IMR-90 (cell line): ENCODE measurements at regions of chr10 and their contacts with region 1.

Region 1: DNA sequence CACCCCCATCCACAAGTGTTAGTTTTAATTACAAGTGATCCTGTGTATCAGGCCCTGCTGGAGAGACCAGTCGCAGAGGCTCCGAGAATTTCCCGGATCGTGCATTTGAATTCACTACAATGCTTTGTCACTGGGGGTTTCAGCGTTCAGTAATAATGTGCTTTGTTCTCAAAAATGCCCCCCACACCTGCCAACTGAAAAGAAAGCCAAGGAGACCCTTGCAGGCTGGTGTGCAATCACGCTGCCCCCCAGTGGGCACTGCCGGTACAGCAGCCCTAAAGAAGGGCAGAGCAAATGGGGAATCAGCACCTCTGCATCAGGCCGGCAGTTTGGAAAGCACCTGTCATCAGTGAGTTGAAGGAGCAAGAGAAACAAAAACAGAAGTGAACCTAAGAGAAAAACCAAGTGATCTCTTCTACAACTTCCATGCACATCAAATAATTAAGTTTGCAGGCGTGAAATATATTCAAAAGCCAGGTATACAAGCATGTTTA is 177.6 kb downstream of the PARD3 start:
- DNase-seq: peak; percentile 23
- ATAC-seq: peak; percentile 79
- H3K4me3 ChIP-seq: no peak overlapping the region
- H3K27ac ChIP-seq: no peak overlapping the region
- H3K4me1 ChIP-seq: no peaks in the 10 kb centered on the region
- H3K27me3 ChIP-seq: no peaks in the 10 kb centered on the region
- CTCF ChIP-seq: peak; percentile 86
- POLR2A ChIP-seq: no peak
- RAD21 ChIP-seq: peak; percentile 87

Region 2: GRCh38 chr10:33193057-33193700 is 1444.3 kb before region 1 on chr10:
- CTCF ChIA-PET with region 1: interaction called, 4 read pairs
- POLR2A ChIA-PET with region 1: no interaction called
- dilution Hi-C with region 1: no loop called
- in situ Hi-C with region 1: no loop called
- intact Hi-C with region 1: loop called (anchors 1 kb)
- DNase-seq: peak; percentile 87
- ATAC-seq: peak; percentile 81
- H3K4me3 ChIP-seq: no peak overlapping the region
- H3K27ac ChIP-seq: no peak overlapping the region
- H3K4me1 ChIP-seq: peaks cover 18% of the 10 kb centered on the region
- H3K27me3 ChIP-seq: no peaks in the 10 kb centered on the region
- CTCF ChIP-seq: peak; percentile 77
- POLR2A ChIP-seq: no peak
- RAD21 ChIP-seq: peak; percentile 84

Region 3: GRCh38 chr10:33901166-33901565 is 736.3 kb before region 1 on chr10:
- CTCF ChIA-PET with region 1: no interaction called
- POLR2A ChIA-PET with region 1: no interaction called
- dilution Hi-C with region 1: no loop called
- in situ Hi-C with region 1: no loop called
- intact Hi-C with region 1: loop called (anchors 10 kb)
- DNase-seq: peak; percentile 92
- ATAC-seq: peak; percentile 80
- H3K4me3 ChIP-seq: no peak overlapping the region
- H3K27ac ChIP-seq: peak overlapping the region; percentile 48; the same call in 1 of the 2 replicates
- H3K4me1 ChIP-seq: peaks cover 7% of the 10 kb centered on the region
- H3K27me3 ChIP-seq: no peaks in the 10 kb centered on the region; the same call in 1 of the 2 replicates
- CTCF ChIP-seq: no peak
- POLR2A ChIP-seq: no peak
- RAD21 ChIP-seq: no peak

Region 4: GRCh38 chr10:34213193-34213804 is 424.2 kb before region 1 on chr10:
- CTCF ChIA-PET with region 1: no interaction called
- POLR2A ChIA-PET with region 1: no interaction called
- dilution Hi-C with region 1: no loop called
- in situ Hi-C with region 1: no loop called
- intact Hi-C with region 1: loop called (anchors 10 kb)
- DNase-seq: no peak
- ATAC-seq: no peak
- H3K4me3 ChIP-seq: no peak overlapping the region
- H3K27ac ChIP-seq: no peak overlapping the region
- H3K4me1 ChIP-seq: peaks cover 8% of the 10 kb centered on the region
- H3K27me3 ChIP-seq: no peaks in the 10 kb centered on the region
- CTCF ChIP-seq: no peak
- POLR2A ChIP-seq: no peak
- RAD21 ChIP-seq: no peak

Region 5: DNA sequence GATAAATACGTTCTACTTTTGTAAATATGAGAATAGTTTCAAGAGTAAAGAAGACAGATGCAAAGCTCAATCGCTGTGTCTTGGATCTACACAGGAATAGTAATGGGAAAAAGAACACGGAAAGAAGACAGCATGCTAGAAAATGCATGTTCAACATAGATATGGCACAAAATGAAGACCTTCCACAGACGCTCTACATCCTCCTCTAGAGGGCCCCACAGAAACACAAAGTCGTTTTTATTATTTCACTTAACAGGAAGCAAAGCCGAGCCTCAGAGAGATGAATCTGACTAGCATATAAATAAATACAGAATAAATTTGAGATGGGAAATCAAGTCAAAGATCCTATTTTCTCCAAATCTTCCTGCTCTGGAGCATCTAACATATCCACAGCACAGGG is 114.9 kb before region 1 on chr10:
- CTCF ChIA-PET with region 1: interaction called, 3 read pairs
- POLR2A ChIA-PET with region 1: no interaction called
- dilution Hi-C with region 1: no loop called
- in situ Hi-C with region 1: loop called (anchors 5 kb)
- intact Hi-C with region 1: loop called (anchors 1 kb)
- DNase-seq: peak; percentile 35
- ATAC-seq: 0 out of 2 replicates have a peak, but pooled peaks have one; percentile 28
- H3K4me3 ChIP-seq: no peak overlapping the region
- H3K27ac ChIP-seq: no peak overlapping the region
- H3K4me1 ChIP-seq: peaks cover 10% of the 10 kb centered on the region
- H3K27me3 ChIP-seq: no peaks in the 10 kb centered on the region
- CTCF ChIP-seq: peak; percentile 59
- POLR2A ChIP-seq: no peak
- RAD21 ChIP-seq: peak; percentile 52

Region 6: DNA sequence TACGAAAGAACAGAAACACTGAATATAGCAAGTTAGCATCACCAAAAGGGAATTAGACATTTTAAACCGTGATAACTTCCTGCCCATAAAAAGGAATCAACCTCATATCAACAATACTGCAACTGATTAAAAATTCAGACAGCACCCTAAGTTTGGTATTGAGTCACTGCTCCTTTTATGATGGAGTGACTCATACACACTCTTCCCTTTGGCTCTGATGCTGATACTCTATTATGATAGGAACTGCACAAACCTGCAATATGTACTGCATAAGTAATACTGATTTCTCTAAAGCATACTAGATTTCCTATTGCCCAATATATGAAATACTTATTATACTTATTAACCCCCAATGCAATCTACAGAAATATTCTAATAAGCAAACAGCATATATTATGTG is 59.0 kb after region 1 on chr10:
- CTCF ChIA-PET with region 1: no interaction called
- POLR2A ChIA-PET with region 1: no interaction called
- dilution Hi-C with region 1: no loop called
- in situ Hi-C with region 1: no loop called
- intact Hi-C with region 1: no loop called
- DNase-seq: peak; percentile 84
- ATAC-seq: peak; percentile 74
- H3K4me3 ChIP-seq: no peak overlapping the region
- H3K27ac ChIP-seq: no peak overlapping the region
- H3K4me1 ChIP-seq: peaks cover 5% of the 10 kb centered on the region
- H3K27me3 ChIP-seq: no peaks in the 10 kb centered on the region
- CTCF ChIP-seq: no peak
- POLR2A ChIP-seq: no peak
- RAD21 ChIP-seq: no peak

Region 7: DNA sequence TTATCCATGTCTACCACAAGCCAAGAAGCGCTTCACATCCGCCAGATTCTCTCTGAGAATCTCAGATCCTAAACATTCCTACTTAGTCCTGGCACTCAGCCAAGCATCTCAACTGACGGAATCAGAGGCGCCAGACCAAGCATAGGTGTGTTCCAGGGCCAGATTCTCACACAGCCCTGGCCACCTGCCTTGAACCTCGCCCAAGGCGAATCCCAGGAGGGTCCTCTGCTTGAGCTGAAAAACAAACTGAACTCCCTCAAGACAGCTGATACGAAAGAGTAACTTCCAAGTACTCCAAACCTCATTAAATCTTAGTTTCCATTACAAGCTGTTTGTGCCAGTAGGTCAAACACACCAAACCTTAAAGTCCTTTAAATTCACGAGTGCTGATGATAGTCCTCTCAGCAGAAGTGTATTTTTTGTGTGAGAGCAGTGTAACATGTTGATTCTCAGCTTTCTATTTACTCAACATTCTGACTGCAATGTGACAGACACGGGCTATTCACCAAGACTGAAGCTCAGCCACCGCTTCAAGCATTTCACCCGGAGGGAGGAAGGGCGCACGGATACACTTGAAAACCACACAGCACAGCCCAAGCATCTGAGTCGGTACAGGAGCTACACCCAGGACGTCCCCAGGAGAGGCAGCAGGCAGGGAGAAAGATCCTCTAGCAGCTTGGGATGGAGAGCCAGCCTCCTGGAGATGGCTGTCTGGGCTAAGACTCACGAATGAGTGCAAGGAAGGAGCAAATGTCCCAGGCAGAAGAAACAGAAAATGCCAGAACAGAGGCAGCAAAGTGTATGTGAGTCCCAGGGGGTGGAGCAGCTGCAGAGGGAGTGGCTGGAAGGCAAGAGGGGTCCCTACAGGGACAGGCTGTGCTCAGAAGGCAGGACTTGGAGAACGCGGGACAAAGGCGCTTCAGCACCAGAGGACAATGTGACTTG is 171.6 kb after region 1 on chr10:
- CTCF ChIA-PET with region 1: no interaction called
- POLR2A ChIA-PET with region 1: no interaction called
- dilution Hi-C with region 1: no loop called
- in situ Hi-C with region 1: no loop called
- intact Hi-C with region 1: no loop called
- DNase-seq: peak; percentile 43
- ATAC-seq: peak; percentile 41
- H3K4me3 ChIP-seq: peak overlapping the region; percentile 44
- H3K27ac ChIP-seq: no peak overlapping the region
- H3K4me1 ChIP-seq: peaks cover 12% of the 10 kb centered on the region
- H3K27me3 ChIP-seq: no peaks in the 10 kb centered on the region
- CTCF ChIP-seq: no peak
- POLR2A ChIP-seq: no peak
- RAD21 ChIP-seq: no peak